ENCODE measurements at regions of chr12 and their contacts with region 1.

Region 1: DNA sequence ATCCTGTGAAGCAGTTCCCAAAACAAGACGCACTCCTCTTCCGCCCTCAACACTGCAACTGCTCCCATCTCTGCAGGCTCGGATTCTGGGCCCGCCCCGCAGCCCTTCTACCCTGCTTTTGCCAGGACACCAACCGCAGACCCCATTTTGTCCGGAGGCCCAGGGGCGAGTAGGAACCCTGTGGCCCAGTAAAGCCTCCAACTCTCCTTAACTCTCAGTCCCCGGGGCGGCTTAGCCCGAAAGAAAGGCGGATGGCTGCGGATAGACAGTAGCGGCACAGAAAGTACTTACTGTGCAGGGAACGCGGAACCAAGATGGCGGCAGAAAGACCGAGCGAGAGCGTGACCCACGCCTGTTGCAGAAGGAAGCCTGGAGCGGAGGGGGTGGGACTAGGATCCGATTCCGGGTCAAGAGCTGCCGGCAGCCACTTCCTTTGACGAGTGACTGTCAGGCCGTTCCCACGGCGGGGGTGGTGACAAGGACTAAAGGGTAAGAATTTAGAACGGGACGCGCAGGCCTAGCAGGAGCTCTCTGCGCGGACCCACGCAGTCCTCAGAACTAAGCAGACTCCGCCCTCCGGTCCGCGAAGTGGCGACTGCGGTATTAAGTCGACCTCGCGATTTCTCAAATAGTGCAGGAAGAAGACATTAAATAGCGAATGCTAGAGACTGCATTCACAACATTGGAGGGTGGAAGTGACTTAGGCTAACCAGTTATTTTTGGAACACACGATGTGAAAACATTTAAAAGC is at the start of gene NACA:
- DNase-seq: peak; percentile 94
- H3K4me3 ChIP-seq: peak within 1 kb of the TSS; percentile 92 to 94
- H3K27ac ChIP-seq: peak within 1 kb of the TSS; percentile 91 to 93
- H3K4me1 ChIP-seq: peaks cover 27 to 30% of the 10 kb centered on the region in 2 experiments
- H3K27me3 ChIP-seq: no peaks in the 10 kb centered on the region
- CTCF ChIP-seq: no peak
- EP300 ChIP-seq: no peak; a peak in 1 of 4 replicates
- RAD21 ChIP-seq: peak; percentile 3; the same call in 1 of the 2 replicates
- polyA plus RNA-seq, gene NACA: 523 and 644 TPM in 2 replicates

Region 2: DNA sequence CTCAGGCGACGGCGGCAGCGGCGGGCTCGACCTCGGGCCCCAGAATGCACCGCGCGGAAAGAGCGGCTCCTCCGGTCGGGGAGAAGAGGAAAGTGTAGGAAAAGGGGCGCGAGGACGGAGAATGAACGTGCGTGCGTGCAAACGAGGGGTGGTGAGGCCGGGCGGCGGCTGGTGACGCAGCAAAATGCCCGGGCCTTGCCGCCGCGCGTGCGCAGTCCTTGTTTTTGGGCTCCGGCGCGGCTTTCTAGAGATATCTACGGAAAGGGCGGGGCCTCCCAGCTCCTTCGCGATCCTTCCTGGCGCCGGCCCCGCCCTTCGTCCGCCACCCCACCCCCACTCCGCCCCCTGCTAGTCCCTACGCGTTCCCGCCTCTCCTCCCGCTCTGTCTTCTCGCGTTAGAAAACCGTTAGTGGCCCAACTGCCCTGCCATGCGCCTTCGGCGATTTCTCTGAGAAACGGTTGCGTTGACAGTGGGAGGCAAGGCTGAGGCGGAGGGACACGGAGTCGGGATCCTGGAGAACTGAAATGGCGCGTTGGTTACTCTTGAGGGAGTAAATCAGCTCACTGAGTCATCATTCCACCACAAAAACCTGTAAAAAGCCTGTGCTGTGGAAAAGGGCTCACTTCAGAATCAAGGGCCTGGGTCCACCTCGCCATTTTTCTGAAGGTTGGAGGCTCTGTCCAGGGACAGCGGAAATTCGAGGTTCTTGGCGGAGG is 36.9 kb before region 1 on chr12 and contains the start of gene PTGES3:
- CTCF ChIA-PET with region 1: no interaction called
- POLR2A ChIA-PET with region 1: interaction called, 12 read pairs
- DNase-seq: peak; percentile 97
- H3K4me3 ChIP-seq: peak within 1 kb of the TSS; percentile 80 to 100
- H3K27ac ChIP-seq: peak within 1 kb of the TSS; percentile 95 to 98
- H3K4me1 ChIP-seq: peaks cover 10 to 20% of the 10 kb centered on the region in 2 experiments; a peak in 3 of 4 replicates
- H3K27me3 ChIP-seq: no peaks in the 10 kb centered on the region
- CTCF ChIP-seq: no peak
- EP300 ChIP-seq: peak in 1 of 2 experiments; percentile 75; a peak in 2 of 4 replicates
- RAD21 ChIP-seq: no peak
- polyA plus RNA-seq, gene PTGES3: 38.9 and 40.5 TPM in 2 replicates

Region 3: DNA sequence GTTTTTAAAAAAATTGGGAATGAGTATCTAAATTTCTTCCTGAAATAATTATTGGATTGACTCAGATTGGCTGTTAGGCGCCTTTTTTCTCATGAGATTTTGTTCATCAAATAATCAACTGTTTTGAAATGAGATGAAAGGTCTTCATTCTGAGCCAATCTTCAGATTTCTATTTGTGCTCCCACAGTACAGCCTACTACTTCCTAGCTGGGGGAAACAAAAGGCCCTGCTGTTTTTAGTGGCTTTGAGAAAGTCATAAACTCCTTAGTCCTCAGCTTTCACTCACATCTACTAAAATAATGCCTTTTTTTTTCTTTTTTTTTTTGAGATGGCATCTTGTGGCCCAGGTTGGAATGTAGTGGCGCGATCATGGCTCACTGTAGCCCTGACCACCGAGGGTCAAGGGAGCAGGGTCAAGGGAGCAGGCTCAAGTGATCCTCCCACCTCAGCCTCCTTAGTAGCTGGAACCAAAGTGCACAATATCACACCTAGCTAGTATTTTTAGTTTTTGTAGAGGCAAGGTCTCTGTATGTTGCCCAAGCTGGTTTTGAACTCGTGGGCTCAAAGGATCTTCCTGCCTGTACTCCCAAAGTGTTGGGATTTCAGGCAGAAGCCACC is 15.3 kb before region 1 on chr12:
- CTCF ChIA-PET with region 1: interaction called, 3 read pairs
- POLR2A ChIA-PET with region 1: interaction called, 11 read pairs
- DNase-seq: no peak
- H3K4me3 ChIP-seq: no peak overlapping the region
- H3K27ac ChIP-seq: no peak overlapping the region
- H3K4me1 ChIP-seq: no peaks in the 10 kb centered on the region
- H3K27me3 ChIP-seq: no peaks in the 10 kb centered on the region
- CTCF ChIP-seq: no peak
- EP300 ChIP-seq: no peak
- RAD21 ChIP-seq: no peak

Region 4: DNA sequence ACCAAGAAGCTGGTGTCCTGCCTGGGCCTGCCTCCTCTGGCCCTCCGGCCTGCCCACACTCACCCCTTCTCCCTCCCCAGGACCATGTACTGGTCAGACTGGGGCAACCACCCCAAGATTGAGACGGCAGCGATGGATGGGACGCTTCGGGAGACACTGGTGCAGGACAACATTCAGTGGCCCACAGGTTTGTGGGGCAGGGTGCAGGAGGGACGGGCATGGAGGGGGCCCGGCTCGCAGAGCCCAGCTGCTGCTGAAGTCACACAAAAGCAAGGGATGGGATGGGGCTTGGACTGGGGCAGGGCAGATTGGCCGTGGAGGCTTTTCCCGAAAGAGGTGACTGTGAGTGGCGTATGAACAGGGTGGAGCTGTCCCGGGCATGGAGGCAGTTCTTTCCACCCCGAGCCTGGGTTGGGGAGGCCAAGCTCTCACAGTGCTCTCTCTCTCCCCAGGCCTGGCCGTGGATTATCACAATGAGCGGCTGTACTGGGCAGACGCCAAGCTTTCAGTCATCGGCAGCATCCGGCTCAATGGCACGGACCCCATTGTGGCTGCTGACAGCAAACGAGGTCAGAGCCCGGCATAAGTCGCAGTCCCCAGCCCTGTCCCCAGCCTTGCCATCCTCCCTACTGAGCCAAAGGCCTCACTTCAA is 483.6 kb after region 1 on chr12:
- CTCF ChIA-PET with region 1: no interaction called
- POLR2A ChIA-PET with region 1: no interaction called
- DNase-seq: no peak
- H3K4me3 ChIP-seq: no peak overlapping the region
- H3K27ac ChIP-seq: no peak overlapping the region
- H3K4me1 ChIP-seq: peaks cover 0 to 4% of the 10 kb centered on the region in 2 experiments; a peak in 1 of 4 replicates
- H3K27me3 ChIP-seq: no peaks in the 10 kb centered on the region
- CTCF ChIP-seq: no peak
- EP300 ChIP-seq: no peak
- RAD21 ChIP-seq: no peak